GM12878 (cell line): ENCODE measurements at regions of chr22 and their contacts with region 1.

Region 1: DNA sequence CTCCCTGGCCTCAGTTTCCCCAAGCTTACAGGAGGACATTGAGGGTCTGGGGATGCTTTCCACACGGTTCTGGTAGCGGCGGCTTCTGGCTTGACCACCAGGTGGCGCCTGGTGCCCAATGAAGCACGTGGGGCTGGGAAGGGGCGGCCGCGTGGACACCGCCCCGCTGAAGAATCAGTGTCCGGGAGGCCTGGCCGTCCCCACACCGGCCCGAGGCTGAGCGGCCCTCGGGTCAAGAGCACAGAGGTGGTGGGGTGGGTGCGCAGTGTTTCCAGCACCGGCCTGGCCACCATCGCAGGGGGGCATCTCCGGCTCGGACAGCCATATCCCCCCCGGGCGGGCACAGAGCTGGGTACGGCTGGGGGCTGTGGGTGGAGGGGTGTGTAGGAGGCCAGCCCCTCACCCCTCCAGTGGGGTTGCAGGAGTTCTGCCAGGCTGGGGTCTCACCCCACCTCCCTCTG is 27.8 kb upstream of the PPARA start:
- DNase-seq: no peak
- ATAC-seq: peak; percentile 89
- H3K4me3 ChIP-seq: no peak overlapping the region
- H3K27ac ChIP-seq: no peak overlapping the region
- H3K4me1 ChIP-seq: no peaks in the 10 kb centered on the region
- H3K27me3 ChIP-seq: no peaks in the 10 kb centered on the region; a peak in 1 of 4 replicates
- CTCF ChIP-seq: peak; percentile 81 to 95 (median 87); a peak in 5 of 6 replicates
- EP300 ChIP-seq: no peak
- POLR2A ChIP-seq: no peak
- RAD21 ChIP-seq: peak; percentile 77

Region 2: DNA sequence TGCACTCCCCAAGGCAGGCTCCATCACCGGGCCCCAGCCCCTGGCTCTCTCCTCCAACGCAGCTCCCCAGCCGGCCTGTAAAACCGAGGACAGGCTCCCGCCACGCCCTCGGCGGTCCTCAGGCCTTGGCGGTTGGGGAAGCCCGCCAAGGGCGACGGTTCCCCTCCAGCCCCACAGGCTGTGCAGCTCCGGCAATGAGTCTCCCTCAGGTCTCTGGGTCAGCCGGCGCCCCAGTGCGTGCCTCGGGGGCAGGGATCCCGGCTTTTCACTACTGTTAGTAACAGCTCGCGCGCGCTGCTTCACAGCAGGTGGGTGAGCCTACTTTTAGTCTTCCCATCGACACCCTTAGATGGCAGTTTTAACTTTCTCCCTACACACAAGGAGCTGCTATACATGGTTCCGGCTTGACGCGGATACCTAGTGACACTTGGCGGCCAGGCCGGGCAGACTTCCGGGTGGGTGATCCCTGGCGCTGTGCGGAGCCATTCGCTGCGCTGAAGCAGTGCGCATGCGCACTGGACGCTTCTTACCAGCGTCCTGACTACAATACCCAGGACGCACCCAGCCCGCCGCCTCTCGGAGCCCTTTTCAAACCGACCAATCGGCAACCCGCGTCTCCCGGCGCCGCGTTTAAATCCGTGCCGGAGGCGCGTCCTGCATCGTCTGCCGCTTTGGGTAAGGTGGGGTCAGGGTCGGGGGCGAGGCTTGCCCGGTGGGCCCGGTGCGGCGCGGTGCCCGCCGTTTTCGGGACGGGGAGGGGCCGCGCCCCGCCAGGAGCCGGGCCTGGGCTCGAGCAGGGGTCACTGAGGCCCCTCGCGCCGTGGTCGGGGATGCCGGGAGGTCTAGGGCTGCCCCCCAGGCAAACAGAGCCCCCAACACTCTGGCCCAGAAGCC is 174.0 kb after region 1 on chr22 and contains the start of gene GTSE1:
- CTCF ChIA-PET with region 1: interaction called, 9 read pairs
- POLR2A ChIA-PET with region 1: no interaction called
- RAD21 ChIA-PET with region 1: interaction called, 10 read pairs
- SMC1A ChIA-PET with region 1: interaction called, 6 read pairs
- in situ Hi-C with region 1: no loop called
- intact Hi-C with region 1: loop called (anchors 5 kb)
- DNase-seq: peak; percentile 96
- ATAC-seq: peak; percentile 97
- H3K4me3 ChIP-seq: peak within 1 kb of the TSS; percentile 100
- H3K27ac ChIP-seq: peak within 1 kb of the TSS; percentile 95
- H3K4me1 ChIP-seq: peaks cover 32% of the 10 kb centered on the region
- H3K27me3 ChIP-seq: no peaks in the 10 kb centered on the region
- CTCF ChIP-seq: peak in 2 of 3 experiments; percentile 27 to 59; a peak in 3 of 6 replicates
- EP300 ChIP-seq: no peak
- POLR2A ChIP-seq: peak; percentile 93
- RAD21 ChIP-seq: peak; percentile 49
- polyA plus RNA-seq, gene GTSE1: 6.6 to 10.0 TPM

Region 3: DNA sequence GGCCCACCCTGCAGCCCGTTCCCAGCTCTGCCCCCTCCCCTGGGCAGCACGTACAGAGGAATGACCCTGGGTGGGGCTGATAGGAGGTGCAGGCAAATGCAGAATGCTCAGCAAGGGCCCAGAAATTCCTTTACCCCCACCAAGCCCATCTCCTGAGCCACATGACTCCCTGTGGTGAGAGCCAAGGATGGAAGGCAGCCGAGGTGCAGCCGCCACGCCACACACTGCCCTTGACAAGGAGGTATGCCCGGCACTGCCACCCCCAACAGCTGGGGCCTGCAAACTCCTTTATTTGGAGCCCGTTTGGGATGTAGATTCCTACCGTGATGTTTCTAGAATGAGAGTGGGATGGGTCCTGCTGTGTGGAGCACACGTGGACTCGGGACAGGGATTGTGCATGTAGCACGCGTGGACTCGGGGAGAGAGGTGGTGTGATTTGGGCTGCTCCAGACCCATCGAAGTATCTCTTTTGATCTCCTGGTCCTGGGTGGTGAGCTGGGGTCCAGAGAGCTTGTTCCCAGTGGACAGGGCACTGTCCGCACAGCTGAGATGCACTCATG is 187.1 kb after region 1 on chr22:
- CTCF ChIA-PET with region 1: interaction called, 32 read pairs
- POLR2A ChIA-PET with region 1: no interaction called
- RAD21 ChIA-PET with region 1: interaction called, 15 read pairs
- SMC1A ChIA-PET with region 1: interaction called, 11 read pairs
- in situ Hi-C with region 1: loop called (anchors 5 kb)
- intact Hi-C with region 1: loop called (anchors 1 kb)
- DNase-seq: no peak
- ATAC-seq: no peak
- H3K4me3 ChIP-seq: no peak overlapping the region
- H3K27ac ChIP-seq: no peak overlapping the region
- H3K4me1 ChIP-seq: no peaks in the 10 kb centered on the region
- H3K27me3 ChIP-seq: no peaks in the 10 kb centered on the region
- CTCF ChIP-seq: no peak
- EP300 ChIP-seq: no peak
- POLR2A ChIP-seq: no peak
- RAD21 ChIP-seq: no peak

Region 4: DNA sequence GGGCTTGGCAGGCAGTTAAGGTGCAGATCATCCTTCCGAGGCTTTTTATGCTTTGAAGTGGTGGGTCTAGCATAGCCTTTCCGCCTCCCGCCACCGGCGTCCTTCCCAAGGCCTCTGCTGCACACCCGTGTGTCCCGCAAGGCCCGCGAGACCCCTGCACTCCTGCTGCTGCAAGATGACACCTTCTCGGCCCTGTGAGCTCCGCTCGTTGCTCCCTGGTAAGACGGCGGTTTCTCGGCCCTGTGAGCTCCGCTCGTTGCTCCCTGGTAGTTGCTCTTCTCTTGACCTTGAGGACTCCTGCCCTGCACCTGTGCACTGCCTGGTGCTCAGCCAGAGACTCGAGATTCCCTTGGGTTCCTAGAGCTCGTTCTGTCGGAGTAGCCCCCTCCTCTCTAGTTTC is 195.1 kb after region 1 on chr22:
- CTCF ChIA-PET with region 1: interaction called, 32 read pairs
- POLR2A ChIA-PET with region 1: no interaction called
- RAD21 ChIA-PET with region 1: interaction called, 15 read pairs
- SMC1A ChIA-PET with region 1: interaction called, 11 read pairs
- in situ Hi-C with region 1: loop called (anchors 5 kb)
- intact Hi-C with region 1: loop called (anchors 1 kb)
- DNase-seq: no peak
- ATAC-seq: no peak
- H3K4me3 ChIP-seq: no peak overlapping the region
- H3K27ac ChIP-seq: no peak overlapping the region
- H3K4me1 ChIP-seq: no peaks in the 10 kb centered on the region
- H3K27me3 ChIP-seq: no peaks in the 10 kb centered on the region
- CTCF ChIP-seq: no peak
- EP300 ChIP-seq: no peak
- POLR2A ChIP-seq: no peak
- RAD21 ChIP-seq: no peak

Region 5: DNA sequence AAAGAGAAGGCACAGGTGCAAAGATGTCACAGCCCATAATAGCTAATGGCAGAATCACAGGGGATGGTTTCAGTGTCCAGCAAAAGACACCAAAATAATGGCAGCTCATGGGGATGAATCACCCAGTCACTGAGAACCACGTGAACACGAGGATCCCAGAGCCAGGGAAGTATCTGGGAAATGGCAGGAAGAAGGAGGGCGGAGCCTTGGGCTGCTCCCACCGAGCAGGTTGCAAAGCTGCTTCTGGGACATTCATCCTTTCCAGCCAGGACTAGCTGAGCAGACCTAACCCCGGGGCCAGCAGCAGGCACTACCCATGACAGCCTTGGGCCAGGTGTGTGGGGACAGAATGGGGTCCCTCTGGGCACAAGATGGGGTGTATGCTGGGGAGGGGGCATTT is 258.7 kb after region 1 on chr22:
- CTCF ChIA-PET with region 1: no interaction called
- POLR2A ChIA-PET with region 1: no interaction called
- RAD21 ChIA-PET with region 1: no interaction called
- SMC1A ChIA-PET with region 1: no interaction called
- in situ Hi-C with region 1: no loop called
- intact Hi-C with region 1: no loop called
- DNase-seq: no peak
- ATAC-seq: no peak
- H3K4me3 ChIP-seq: no peak overlapping the region
- H3K27ac ChIP-seq: no peak overlapping the region
- H3K4me1 ChIP-seq: no peaks in the 10 kb centered on the region
- H3K27me3 ChIP-seq: no peaks in the 10 kb centered on the region
- CTCF ChIP-seq: no peak
- EP300 ChIP-seq: no peak
- POLR2A ChIP-seq: no peak
- RAD21 ChIP-seq: no peak

Region 6: DNA sequence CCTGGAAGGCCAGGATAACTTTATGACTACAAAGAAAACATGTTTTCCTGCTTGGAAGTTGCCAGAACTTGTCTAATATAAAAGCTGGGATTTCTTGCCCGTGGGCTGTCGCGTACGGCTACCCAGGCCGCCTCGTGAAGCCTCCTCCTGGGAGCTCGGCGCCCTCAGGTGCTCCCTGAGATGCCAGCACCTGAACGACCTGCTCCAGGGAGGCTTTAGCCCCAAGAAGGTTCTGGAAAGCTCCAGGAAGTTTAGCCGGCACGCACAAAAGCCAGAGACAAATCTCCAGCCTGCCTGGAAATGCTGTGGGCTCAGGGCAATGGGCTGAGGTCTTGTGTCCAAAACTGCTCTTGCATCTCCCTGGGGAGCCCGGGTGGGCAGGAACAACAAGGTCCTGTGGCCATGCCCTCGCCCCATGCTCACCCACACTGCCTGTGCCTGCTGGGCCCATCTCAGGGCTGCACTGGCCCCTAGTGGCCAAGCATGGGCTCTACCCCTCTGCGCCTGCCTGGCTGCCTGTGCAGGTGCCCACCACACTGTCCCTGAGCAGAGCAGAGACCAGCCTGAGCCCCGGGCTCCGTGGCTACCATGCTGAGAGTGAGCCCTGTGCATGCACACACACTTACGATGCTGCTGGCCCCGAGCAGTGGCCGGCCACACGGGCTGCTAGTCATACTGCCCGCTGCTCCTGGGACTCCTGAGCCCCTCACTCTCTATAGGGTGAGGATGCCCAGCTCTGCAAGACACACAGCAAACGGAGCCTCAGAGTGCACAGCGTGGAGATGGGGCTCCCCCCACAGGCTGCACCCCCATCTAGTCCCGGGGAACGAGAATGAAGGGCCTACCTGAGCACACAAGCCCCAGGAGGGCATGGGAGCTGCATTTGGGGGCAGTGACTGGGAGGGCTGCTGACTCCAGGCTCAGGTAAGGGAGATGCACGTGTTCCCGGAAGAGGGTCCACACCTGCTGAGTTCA is 419.8 kb after region 1 on chr22:
- CTCF ChIA-PET with region 1: interaction called, 10 read pairs
- POLR2A ChIA-PET with region 1: no interaction called
- RAD21 ChIA-PET with region 1: no interaction called
- SMC1A ChIA-PET with region 1: no interaction called
- in situ Hi-C with region 1: loop called (anchors 5 kb)
- intact Hi-C with region 1: loop called (anchors 5 kb)
- DNase-seq: peak; percentile 21
- ATAC-seq: peak; percentile 96
- H3K4me3 ChIP-seq: no peak overlapping the region
- H3K27ac ChIP-seq: no peak overlapping the region
- H3K4me1 ChIP-seq: no peaks in the 10 kb centered on the region; the same call in 1 of the 2 replicates
- H3K27me3 ChIP-seq: peaks cover 0 to 10% of the 10 kb centered on the region in 2 experiments; a peak in 1 of 4 replicates
- CTCF ChIP-seq: peak; percentile 95 to 99 (median 96)
- EP300 ChIP-seq: no peak
- POLR2A ChIP-seq: no peak
- RAD21 ChIP-seq: peak; percentile 94